Right lobe of liver (tissue), 6 donors: ENCODE measurements at regions of chr19 and their contacts with region 1.

Region 1: GRCh38 chr19:3665681-3666544 is 34.4 kb downstream of the PIP5K1C start:
- DNase-seq: peak; percentile 68 to 77 (median 71)
- ATAC-seq: peak; percentile 70 to 88 (median 78)
- H3K4me3 ChIP-seq: no peak overlapping the region
- H3K27ac ChIP-seq: no peak overlapping the region
- H3K4me1 ChIP-seq: no peaks in the 10 kb centered on the region
- H3K27me3 ChIP-seq: no peaks in the 10 kb centered on the region
- CTCF ChIP-seq: peak; percentile 82 to 95 (median 92)
- POLR2A ChIP-seq: no peak

Region 2: GRCh38 chr19:3700221-3701032 is 34.5 kb after region 1 on chr19 and contains the start of gene PIP5K1C:
- intact Hi-C with region 1: loop called (anchors 5 kb)
- DNase-seq: peak; percentile 92 to 93 (median 92)
- ATAC-seq: peak; percentile 97 to 100 (median 98)
- H3K4me3 ChIP-seq: peak within 1 kb of the TSS; percentile 61 to 86 (median 71)
- H3K27ac ChIP-seq: peak within 1 kb of the TSS; percentile 53 to 81 (median 66)
- H3K4me1 ChIP-seq: no peaks in the 10 kb centered on the region
- H3K27me3 ChIP-seq: no peaks in the 10 kb centered on the region
- CTCF ChIP-seq: peak; percentile 70 to 96 (median 76)
- POLR2A ChIP-seq: peak; percentile 64
- total RNA-seq, gene PIP5K1C: 5.3 to 9.8 (median 7.6) TPM

Region 3: GRCh38 chr19:3708208-3708931 is 42.5 kb after region 1 on chr19 and contains the start of gene TJP3:
- intact Hi-C with region 1: loop called (anchors 5 kb)
- DNase-seq: peak; percentile 83 to 92 (median 88)
- ATAC-seq: peak; percentile 79 to 85 (median 84)
- H3K4me3 ChIP-seq: peak within 1 kb of the TSS; percentile 62 to 75 (median 73)
- H3K27ac ChIP-seq: peak within 1 kb of the TSS; percentile 47 to 86 (median 81)
- H3K4me1 ChIP-seq: peaks cover 0 to 28% (median 9%) of the 10 kb centered on the region in 4 donors
- H3K27me3 ChIP-seq: no peaks in the 10 kb centered on the region
- CTCF ChIP-seq: no peak
- POLR2A ChIP-seq: peak; percentile 56
- total RNA-seq, gene TJP3: 7.9 to 27.0 (median 16.5) TPM